Natural killer cell (primary cell): ENCODE measurements at regions of chr5 and their contacts with region 1.

Region 1: GRCh38 chr5:39068099-39068498 is 6.1 kb downstream of the RICTOR start:
- DNase-seq: no peak
- ATAC-seq: no peak
- H3K4me3 ChIP-seq: no peak overlapping the region
- H3K4me3 Mint-ChIP-seq: no peak overlapping the region
- H3K27ac ChIP-seq: no peak overlapping the region
- H3K27ac Mint-ChIP-seq: peak overlapping the region; percentile 50 to 51
- H3K4me1 ChIP-seq: peaks cover 11% of the 10 kb centered on the region
- H3K4me1 Mint-ChIP-seq: peaks cover 74 to 78% of the 10 kb centered on the region in 2 donors
- H3K27me3 ChIP-seq: no peaks in the 10 kb centered on the region
- H3K27me3 Mint-ChIP-seq: no peaks in the 10 kb centered on the region
- CTCF ChIP-seq: no peak

Region 2: GRCh38 chr5:38845526-38846378 is 222.3 kb before region 1 on chr5 and contains the start of gene OSMR:
- intact Hi-C with region 1: no loop called
- DNase-seq: no peak
- ATAC-seq: no peak
- H3K4me3 ChIP-seq: no peak within 1 kb of the TSS
- H3K4me3 Mint-ChIP-seq: peak within 1 kb of the TSS; percentile 67
- H3K27ac ChIP-seq: no peak within 1 kb of the TSS
- H3K27ac Mint-ChIP-seq: no peak within 1 kb of the TSS
- H3K4me1 ChIP-seq: no peaks in the 10 kb centered on the region
- H3K4me1 Mint-ChIP-seq: peaks cover 0 to 11% of the 10 kb centered on the region in 2 donors
- H3K27me3 ChIP-seq: peaks cover 8% of the 10 kb centered on the region
- H3K27me3 Mint-ChIP-seq: peaks cover 47 to 62% of the 10 kb centered on the region in 2 donors
- CTCF ChIP-seq: no peak
- total RNA-seq, gene OSMR: not detected

Region 3: DNA sequence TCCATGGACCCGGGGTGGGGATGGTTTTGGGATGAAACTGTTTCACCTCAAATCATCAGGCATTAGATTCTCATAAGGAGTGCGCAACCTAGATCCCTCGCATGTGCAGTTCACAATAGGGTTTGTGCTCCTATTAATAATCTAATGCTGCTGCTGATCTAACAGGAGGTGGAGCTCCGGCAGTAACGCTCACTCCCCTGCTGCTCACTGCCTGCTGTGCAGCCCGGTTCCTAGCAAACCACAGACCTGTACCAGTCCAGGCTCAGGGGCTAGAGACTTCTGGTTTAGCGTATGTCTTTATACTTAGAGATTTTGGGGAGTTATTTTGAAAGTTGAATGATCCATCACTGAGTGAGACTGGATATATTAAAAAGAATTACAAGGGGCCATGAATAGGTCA is 44.1 kb before region 1 on chr5:
- intact Hi-C with region 1: loop called (anchors 5 kb)
- DNase-seq: peak in 1 of 2 donors; percentile 30
- ATAC-seq: peak; percentile 80 to 95 (median 92)
- H3K4me3 ChIP-seq: no peak overlapping the region
- H3K4me3 Mint-ChIP-seq: no peak overlapping the region
- H3K27ac ChIP-seq: no peak overlapping the region
- H3K27ac Mint-ChIP-seq: peak overlapping the region; percentile 24 to 39
- H3K4me1 ChIP-seq: peaks cover 12% of the 10 kb centered on the region
- H3K4me1 Mint-ChIP-seq: peaks cover 66 to 67% of the 10 kb centered on the region in 2 donors
- H3K27me3 ChIP-seq: no peaks in the 10 kb centered on the region
- H3K27me3 Mint-ChIP-seq: no peaks in the 10 kb centered on the region
- CTCF ChIP-seq: no peak

Region 4: GRCh38 chr5:39092581-39093350 is 24.7 kb after region 1 on chr5:
- intact Hi-C with region 1: no loop called
- DNase-seq: no peak
- ATAC-seq: no peak
- H3K4me3 ChIP-seq: no peak overlapping the region
- H3K4me3 Mint-ChIP-seq: no peak overlapping the region
- H3K27ac ChIP-seq: no peak overlapping the region
- H3K27ac Mint-ChIP-seq: no peak overlapping the region
- H3K4me1 ChIP-seq: no peaks in the 10 kb centered on the region
- H3K4me1 Mint-ChIP-seq: no peaks in the 10 kb centered on the region
- H3K27me3 ChIP-seq: no peaks in the 10 kb centered on the region
- H3K27me3 Mint-ChIP-seq: peaks cover 16 to 23% of the 10 kb centered on the region in 2 donors
- CTCF ChIP-seq: no peak